ENCODE measurements at regions of chr16 and their contacts with region 1.

Region 1: DNA sequence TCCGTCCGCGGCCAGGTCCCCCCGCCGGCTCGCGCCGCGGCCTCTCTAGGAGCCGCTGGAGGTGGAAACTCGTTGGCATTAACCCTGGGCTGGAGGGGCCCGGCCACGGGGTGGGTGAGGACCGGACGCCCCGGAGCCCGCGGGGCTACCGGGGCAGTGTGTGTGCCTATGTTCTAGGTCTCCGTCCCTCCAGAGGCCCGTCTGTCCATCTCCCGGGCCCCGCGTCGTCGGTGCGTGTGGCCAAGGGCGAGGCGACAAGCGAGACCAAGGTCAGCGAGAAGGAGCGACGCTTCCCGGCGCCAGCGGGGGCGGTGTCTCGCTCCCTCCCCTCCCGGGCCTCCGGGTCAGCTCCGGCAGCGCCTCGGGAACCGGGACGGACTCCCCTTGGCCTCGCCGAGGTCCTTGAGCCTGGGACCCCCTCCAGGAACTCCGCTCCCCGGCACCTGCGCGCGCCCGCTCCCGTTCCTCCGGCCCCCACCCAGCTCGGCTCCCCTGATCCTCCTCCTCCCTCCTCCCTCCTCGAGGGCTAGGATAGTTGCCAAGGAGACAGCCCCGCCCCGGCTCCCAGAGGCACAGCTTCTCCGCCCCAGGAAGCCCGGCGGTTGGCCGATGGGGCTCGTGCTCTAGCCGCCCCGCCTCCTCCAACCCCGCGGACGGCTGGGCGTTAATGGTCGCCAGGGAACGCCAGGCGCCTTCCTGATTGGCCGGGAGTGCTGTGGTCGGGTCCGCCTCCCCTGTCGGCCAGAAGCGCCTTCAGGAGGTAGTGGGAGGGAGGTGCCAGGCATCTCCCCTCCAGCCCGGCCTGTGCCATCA is 663 bp upstream of the ZNF768 start:
- DNase-seq: peak; percentile 98
- ATAC-seq: peak; percentile 93
- H3K4me3 Mint-ChIP-seq: peak overlapping the region; percentile 55
- H3K27ac Mint-ChIP-seq: peak overlapping the region; percentile 62
- H3K4me1 Mint-ChIP-seq: peaks cover 37% of the 10 kb centered on the region
- H3K27me3 Mint-ChIP-seq: no peaks in the 10 kb centered on the region

Region 2: GRCh38 chr16:30335598-30336474 is 191.2 kb before region 1 on chr16:
- CTCF ChIA-PET with region 1: no interaction called
- POLR2A ChIA-PET with region 1: no interaction called
- intact Hi-C with region 1: loop called in 1 of 2 experiments (anchors 1 kb)
- DNase-seq: peak; percentile 55
- ATAC-seq: peak; percentile 13
- H3K4me3 Mint-ChIP-seq: peak overlapping the region; percentile 87
- H3K27ac Mint-ChIP-seq: peak overlapping the region; percentile 73
- H3K4me1 Mint-ChIP-seq: peaks cover 22% of the 10 kb centered on the region
- H3K27me3 Mint-ChIP-seq: no peaks in the 10 kb centered on the region

Region 3: GRCh38 chr16:30395155-30395991 is 131.7 kb before region 1 on chr16 and contains the start of gene ZNF48:
- CTCF ChIA-PET with region 1: no interaction called
- POLR2A ChIA-PET with region 1: no interaction called
- intact Hi-C with region 1: no loop called
- DNase-seq: peak; percentile 67
- ATAC-seq: peak; percentile 61
- H3K4me3 Mint-ChIP-seq: peak within 1 kb of the TSS; percentile 81
- H3K27ac Mint-ChIP-seq: peak within 1 kb of the TSS; percentile 48
- H3K4me1 Mint-ChIP-seq: peaks cover 28% of the 10 kb centered on the region
- H3K27me3 Mint-ChIP-seq: no peaks in the 10 kb centered on the region
- total RNA-seq, gene ZNF48: 10.6 to 11.0 TPM

Region 4: DNA sequence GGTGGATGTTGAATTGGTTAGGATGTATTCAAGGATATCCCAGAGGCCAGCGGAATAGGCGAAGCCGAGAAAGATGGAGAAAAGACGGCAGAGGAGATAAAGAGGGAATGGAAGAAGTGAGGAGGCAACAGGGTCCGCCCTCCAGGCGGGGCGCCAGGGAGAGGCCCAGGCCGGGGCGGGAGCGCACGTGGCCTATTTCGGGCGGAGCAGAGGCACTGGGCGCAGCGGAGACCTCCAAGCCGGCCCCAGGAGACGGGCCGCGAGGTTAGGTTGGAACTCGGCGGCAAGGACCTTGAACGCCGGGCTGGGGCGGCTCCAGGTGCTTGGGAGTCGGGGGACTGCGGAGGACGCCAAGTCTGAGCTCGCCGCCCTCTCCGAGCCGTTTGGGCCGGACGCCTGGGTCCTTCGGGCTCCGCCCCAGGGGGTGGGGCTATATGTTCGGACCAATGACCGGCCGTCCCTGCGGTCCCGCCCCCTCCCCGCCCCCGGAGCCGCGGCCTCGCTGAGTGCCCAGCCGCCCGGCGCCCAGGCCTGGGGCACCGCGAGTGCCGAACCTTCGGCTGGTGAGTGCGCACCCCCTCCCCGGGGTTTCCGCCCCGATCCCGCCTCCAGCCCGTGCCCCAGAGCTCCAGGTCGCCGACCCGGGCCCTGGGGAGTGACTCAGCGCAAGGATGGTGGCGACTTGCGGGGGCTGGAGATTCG is 119.8 kb before region 1 on chr16 and contains the start of gene ZNF771:
- CTCF ChIA-PET with region 1: no interaction called
- POLR2A ChIA-PET with region 1: no interaction called
- intact Hi-C with region 1: loop called in 1 of 2 experiments (anchors 1 kb)
- DNase-seq: peak; percentile 95
- ATAC-seq: peak; percentile 85
- H3K4me3 Mint-ChIP-seq: peak within 1 kb of the TSS; percentile 79
- H3K27ac Mint-ChIP-seq: peak within 1 kb of the TSS; percentile 97
- H3K4me1 Mint-ChIP-seq: peaks cover 26% of the 10 kb centered on the region
- H3K27me3 Mint-ChIP-seq: peaks cover 2% of the 10 kb centered on the region
- total RNA-seq, gene ZNF771: 3.8 to 4.0 TPM

Region 5: GRCh38 chr16:30472328-30472942 is 54.6 kb before region 1 on chr16 and contains the start of gene ITGAL:
- CTCF ChIA-PET with region 1: interaction called, 3 read pairs
- POLR2A ChIA-PET with region 1: interaction called, 3 read pairs
- intact Hi-C with region 1: loop called in 1 of 2 experiments (anchors 2 kb)
- DNase-seq: peak; percentile 93
- ATAC-seq: peak; percentile 62
- H3K4me3 Mint-ChIP-seq: peak within 1 kb of the TSS; percentile 95
- H3K27ac Mint-ChIP-seq: peak within 1 kb of the TSS; percentile 99
- H3K4me1 Mint-ChIP-seq: peaks cover 63% of the 10 kb centered on the region
- H3K27me3 Mint-ChIP-seq: no peaks in the 10 kb centered on the region
- total RNA-seq, gene ITGAL: 210 to 222 TPM

Region 6: DNA sequence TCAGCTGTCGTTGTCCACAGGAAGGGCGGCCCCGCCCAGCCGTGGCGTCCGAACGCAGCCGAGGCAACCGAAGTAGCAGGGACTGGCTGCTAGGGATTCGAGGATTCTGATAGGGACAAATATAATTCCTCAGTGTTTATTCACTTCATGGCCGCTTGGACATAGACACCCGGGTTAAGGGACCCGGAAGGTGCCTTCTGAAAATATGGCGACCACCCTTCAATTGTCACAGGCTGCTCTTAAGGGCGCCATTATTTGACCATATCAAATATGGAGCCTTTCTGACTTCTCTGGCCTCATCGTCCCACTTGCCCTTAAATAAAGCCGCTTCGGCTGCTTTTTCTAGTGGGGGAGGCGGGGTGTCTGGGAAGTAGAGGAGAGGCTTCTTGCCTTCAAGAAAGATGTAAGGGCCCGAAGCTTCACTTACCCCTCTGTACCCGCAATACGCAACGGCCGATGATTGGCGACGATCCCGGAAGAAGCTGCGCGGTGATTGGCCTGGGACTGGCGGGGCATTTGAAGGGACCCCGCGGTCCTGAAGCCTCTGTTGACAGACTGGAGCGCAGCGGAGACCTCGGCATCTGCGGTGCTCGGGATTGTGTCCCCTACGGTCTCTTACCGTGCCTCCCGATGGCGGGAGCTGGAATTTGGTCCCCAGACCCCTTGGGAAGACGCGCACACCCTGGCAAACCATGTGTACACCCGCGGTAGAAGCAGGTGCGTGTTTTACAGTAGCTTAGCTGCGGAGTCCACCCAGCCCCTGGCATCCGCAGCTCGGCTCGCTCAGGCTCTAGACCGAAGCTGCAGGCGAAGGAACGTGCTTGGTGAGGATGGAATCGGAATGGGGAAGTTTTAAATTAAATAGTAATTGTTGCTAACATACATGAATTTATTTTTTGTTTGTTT is 44.9 kb after region 1 on chr16 and contains the start of gene ZNF688:
- CTCF ChIA-PET with region 1: interaction called, 3 read pairs
- POLR2A ChIA-PET with region 1: interaction called, 4 read pairs
- intact Hi-C with region 1: loop called (anchors 1 to 2 kb)
- DNase-seq: peak; percentile 95
- ATAC-seq: peak; percentile 79
- H3K4me3 Mint-ChIP-seq: peak within 1 kb of the TSS; percentile 87
- H3K27ac Mint-ChIP-seq: peak within 1 kb of the TSS; percentile 93
- H3K4me1 Mint-ChIP-seq: peaks cover 57% of the 10 kb centered on the region
- H3K27me3 Mint-ChIP-seq: no peaks in the 10 kb centered on the region
- total RNA-seq, gene ZNF688: 7.1 to 9.1 TPM

Region 7: GRCh38 chr16:30602616-30603277 is 75.7 kb after region 1 on chr16:
- CTCF ChIA-PET with region 1: interaction called, 4 read pairs
- POLR2A ChIA-PET with region 1: interaction called, 5 read pairs
- intact Hi-C with region 1: loop called in 1 of 2 experiments (anchors 1 kb)
- DNase-seq: no peak
- ATAC-seq: no peak
- H3K4me3 Mint-ChIP-seq: no peak overlapping the region
- H3K27ac Mint-ChIP-seq: no peak overlapping the region
- H3K4me1 Mint-ChIP-seq: peaks cover 7% of the 10 kb centered on the region
- H3K27me3 Mint-ChIP-seq: no peaks in the 10 kb centered on the region

Region 8: DNA sequence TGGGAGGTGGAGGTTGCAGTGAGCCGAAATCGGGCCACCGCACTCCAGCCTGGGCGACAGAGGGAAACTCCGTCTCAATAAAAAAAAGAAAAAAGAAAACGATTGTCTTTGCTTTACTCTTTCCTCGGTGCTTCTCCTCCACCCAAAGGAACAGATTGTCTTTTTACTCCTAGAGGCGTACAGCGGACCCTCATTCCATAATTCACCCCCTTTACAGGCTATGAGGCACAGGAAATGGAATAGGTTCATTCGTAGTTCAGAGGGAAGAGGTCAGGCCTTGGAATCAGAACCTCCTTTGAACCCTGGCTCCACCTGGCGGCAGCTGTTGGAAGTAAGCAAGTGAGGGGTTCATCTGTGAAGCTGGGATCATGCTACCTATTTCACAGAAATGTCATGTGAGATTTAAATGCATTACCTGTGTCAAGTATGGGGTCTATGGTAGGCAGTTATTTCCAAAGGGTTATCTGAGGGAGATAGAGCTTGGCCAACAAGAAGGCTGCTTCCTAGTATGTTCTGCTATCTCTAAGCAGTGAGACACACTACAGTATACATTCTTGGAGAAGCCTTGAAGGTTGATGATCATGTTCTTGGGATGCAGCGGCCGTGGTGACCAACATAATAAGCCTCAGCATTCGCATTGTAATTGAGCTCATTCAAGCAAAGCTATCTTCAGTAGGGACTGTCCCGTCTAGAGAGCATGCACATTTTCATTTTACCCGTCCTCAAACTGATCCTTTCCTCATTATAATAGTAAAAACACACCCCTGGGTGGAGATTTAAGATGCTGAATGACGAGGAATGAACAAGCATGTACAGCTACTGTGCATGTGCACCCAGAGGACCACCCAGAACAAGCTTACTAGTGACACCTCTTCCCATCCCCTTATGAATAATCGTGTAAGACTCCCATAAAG is 101.9 kb after region 1 on chr16:
- CTCF ChIA-PET with region 1: no interaction called
- POLR2A ChIA-PET with region 1: interaction called, 3 read pairs
- intact Hi-C with region 1: loop called in 1 of 2 experiments (anchors 2 kb)
- DNase-seq: peak; percentile 95
- ATAC-seq: peak; percentile 93
- H3K4me3 Mint-ChIP-seq: peak overlapping the region; percentile 58
- H3K27ac Mint-ChIP-seq: peak overlapping the region; percentile 82
- H3K4me1 Mint-ChIP-seq: peaks cover 14% of the 10 kb centered on the region
- H3K27me3 Mint-ChIP-seq: no peaks in the 10 kb centered on the region

Region 9: GRCh38 chr16:30669896-30670797 is 143.1 kb after region 1 on chr16:
- CTCF ChIA-PET with region 1: no interaction called
- POLR2A ChIA-PET with region 1: no interaction called
- intact Hi-C with region 1: no loop called
- DNase-seq: no peak
- ATAC-seq: no peak
- H3K4me3 Mint-ChIP-seq: no peak overlapping the region
- H3K27ac Mint-ChIP-seq: no peak overlapping the region
- H3K4me1 Mint-ChIP-seq: peaks cover 2% of the 10 kb centered on the region
- H3K27me3 Mint-ChIP-seq: no peaks in the 10 kb centered on the region